GM12878 (cell line): ENCODE measurements at regions of chr1 and their contacts with region 1.

Region 1: DNA sequence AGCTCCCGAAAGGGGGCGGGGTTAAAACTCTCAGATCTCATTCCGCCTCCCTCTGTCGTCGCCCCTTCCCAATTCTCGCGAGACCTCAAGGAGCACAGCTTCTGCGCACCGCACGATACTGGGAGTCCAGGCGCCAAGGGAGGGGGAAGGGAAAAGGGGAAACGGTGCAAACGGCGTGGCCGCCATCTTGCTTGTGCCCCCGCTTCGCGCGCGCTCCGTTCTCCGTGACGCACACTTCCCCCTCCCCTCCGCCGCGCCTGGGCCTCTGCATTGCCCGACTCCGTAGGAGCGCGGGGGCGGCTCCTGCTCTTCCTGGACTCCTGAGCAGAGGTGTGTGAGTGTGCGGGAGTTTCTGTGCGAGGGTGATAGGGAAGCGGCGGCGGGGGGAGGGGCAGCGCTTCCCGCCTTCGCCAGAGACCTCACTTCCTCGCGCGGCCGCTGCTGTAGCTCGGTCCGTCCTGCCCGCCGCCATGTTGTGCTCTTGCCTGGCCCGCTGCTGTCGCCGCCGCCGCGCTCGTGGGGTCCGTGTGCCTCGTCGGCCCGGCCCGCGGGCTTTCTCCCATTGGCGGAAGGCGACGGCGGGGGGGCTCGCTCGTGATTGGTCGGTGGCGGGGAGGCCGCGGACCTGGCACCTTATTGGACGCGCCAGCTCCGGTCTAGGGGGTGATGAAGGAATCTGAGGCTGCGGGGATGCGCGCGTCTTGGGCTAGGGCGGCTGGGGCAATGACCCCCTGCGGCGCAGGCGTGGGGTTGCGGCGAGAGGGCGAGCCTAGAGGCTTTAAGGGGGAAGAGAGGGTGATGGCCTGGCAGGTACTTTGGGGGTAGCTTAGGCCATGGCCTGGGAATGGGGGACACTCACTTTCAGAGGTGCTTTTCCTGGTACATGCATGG is at the start of gene NFYC:
- DNase-seq: peak; percentile 94
- ATAC-seq: peak; percentile 94
- H3K4me3 ChIP-seq: peak within 1 kb of the TSS; percentile 95
- H3K27ac ChIP-seq: peak within 1 kb of the TSS; percentile 98
- H3K4me1 ChIP-seq: peaks cover 32% of the 10 kb centered on the region
- H3K27me3 ChIP-seq: no peaks in the 10 kb centered on the region
- CTCF ChIP-seq: peak in 1 of 3 experiments; percentile 10; a peak in 1 of 6 replicates
- EP300 ChIP-seq: peak in 1 of 2 experiments; percentile 45; a peak in 2 of 4 replicates
- POLR2A ChIP-seq: peak; percentile 99
- RAD21 ChIP-seq: no peak
- polyA plus RNA-seq, gene NFYC: 4.3 to 6.9 TPM

Region 2: GRCh38 chr1:40641601-40642242 is 50.1 kb before region 1 on chr1:
- CTCF ChIA-PET with region 1: no interaction called
- POLR2A ChIA-PET with region 1: no interaction called
- RAD21 ChIA-PET with region 1: no interaction called
- SMC1A ChIA-PET with region 1: no interaction called
- in situ Hi-C with region 1: no loop called
- intact Hi-C with region 1: no loop called
- DNase-seq: no peak
- ATAC-seq: no peak
- H3K4me3 ChIP-seq: no peak overlapping the region
- H3K27ac ChIP-seq: no peak overlapping the region
- H3K4me1 ChIP-seq: no peaks in the 10 kb centered on the region
- H3K27me3 ChIP-seq: no peaks in the 10 kb centered on the region
- CTCF ChIP-seq: no peak
- EP300 ChIP-seq: no peak
- POLR2A ChIP-seq: no peak
- RAD21 ChIP-seq: no peak

Region 3: GRCh38 chr1:40703316-40703715 is 11.5 kb after region 1 on chr1:
- CTCF ChIA-PET with region 1: interaction called, 51 read pairs
- POLR2A ChIA-PET with region 1: interaction called, 244 read pairs
- RAD21 ChIA-PET with region 1: interaction called, 89 read pairs
- SMC1A ChIA-PET with region 1: interaction called, 115 read pairs
- in situ Hi-C with region 1: no loop called
- intact Hi-C with region 1: no loop called
- DNase-seq: no peak
- ATAC-seq: no peak
- H3K4me3 ChIP-seq: no peak overlapping the region
- H3K27ac ChIP-seq: peak overlapping the region; percentile 71
- H3K4me1 ChIP-seq: peaks cover 46% of the 10 kb centered on the region
- H3K27me3 ChIP-seq: no peaks in the 10 kb centered on the region
- CTCF ChIP-seq: no peak
- EP300 ChIP-seq: no peak
- POLR2A ChIP-seq: no peak
- RAD21 ChIP-seq: no peak

Region 4: GRCh38 chr1:40709100-40709801 is 17.5 kb after region 1 on chr1:
- CTCF ChIA-PET with region 1: interaction called, 51 read pairs
- POLR2A ChIA-PET with region 1: interaction called, 244 read pairs
- RAD21 ChIA-PET with region 1: interaction called, 89 read pairs
- SMC1A ChIA-PET with region 1: interaction called, 115 read pairs
- in situ Hi-C with region 1: no loop called
- intact Hi-C with region 1: no loop called
- DNase-seq: peak; percentile 96
- ATAC-seq: peak; percentile 96
- H3K4me3 ChIP-seq: peak overlapping the region; percentile 77
- H3K27ac ChIP-seq: peak overlapping the region; percentile 82
- H3K4me1 ChIP-seq: peaks cover 22% of the 10 kb centered on the region
- H3K27me3 ChIP-seq: no peaks in the 10 kb centered on the region
- CTCF ChIP-seq: no peak
- EP300 ChIP-seq: no peak
- POLR2A ChIP-seq: peak; percentile 68
- RAD21 ChIP-seq: no peak

Region 5: DNA sequence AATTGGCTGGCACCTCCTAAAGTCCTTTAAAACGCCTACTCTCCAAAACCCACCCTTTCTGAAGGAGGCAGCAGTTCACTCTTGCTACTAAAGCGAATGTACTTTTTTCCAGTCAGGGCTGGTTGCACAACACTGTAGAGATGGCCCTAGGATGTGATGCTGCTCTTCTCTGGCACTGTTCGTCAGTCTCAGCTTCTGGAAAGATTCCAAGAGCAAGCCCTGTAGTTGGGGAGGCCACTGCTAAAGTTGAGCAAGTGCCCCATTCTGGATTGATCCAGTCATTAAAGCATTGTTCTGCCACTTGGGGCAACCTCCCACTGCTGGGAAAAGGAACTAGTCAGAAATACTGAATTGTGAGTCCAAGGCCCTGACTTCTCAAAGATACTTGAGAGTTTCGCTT is 63.3 kb after region 1 on chr1:
- CTCF ChIA-PET with region 1: interaction called, 9 read pairs
- POLR2A ChIA-PET with region 1: interaction called, 18 read pairs
- RAD21 ChIA-PET with region 1: interaction called, 6 read pairs
- SMC1A ChIA-PET with region 1: interaction called, 11 read pairs
- in situ Hi-C with region 1: no loop called
- intact Hi-C with region 1: loop called (anchors 5 kb)
- DNase-seq: no peak
- ATAC-seq: no peak
- H3K4me3 ChIP-seq: no peak overlapping the region
- H3K27ac ChIP-seq: no peak overlapping the region
- H3K4me1 ChIP-seq: peaks cover 24% of the 10 kb centered on the region
- H3K27me3 ChIP-seq: no peaks in the 10 kb centered on the region
- CTCF ChIP-seq: no peak
- EP300 ChIP-seq: no peak
- POLR2A ChIP-seq: no peak
- RAD21 ChIP-seq: no peak